Left ventricle myocardium superior (tissue), 1 donor: ENCODE measurements at regions of chr1 and their contacts with region 1.

Region 1: GRCh38 chr1:205485338-205486228 is 18.9 kb upstream of the CDK18 start:
- DNase-seq: peak; percentile 63
- ATAC-seq: peak; percentile 79

Region 2: DNA sequence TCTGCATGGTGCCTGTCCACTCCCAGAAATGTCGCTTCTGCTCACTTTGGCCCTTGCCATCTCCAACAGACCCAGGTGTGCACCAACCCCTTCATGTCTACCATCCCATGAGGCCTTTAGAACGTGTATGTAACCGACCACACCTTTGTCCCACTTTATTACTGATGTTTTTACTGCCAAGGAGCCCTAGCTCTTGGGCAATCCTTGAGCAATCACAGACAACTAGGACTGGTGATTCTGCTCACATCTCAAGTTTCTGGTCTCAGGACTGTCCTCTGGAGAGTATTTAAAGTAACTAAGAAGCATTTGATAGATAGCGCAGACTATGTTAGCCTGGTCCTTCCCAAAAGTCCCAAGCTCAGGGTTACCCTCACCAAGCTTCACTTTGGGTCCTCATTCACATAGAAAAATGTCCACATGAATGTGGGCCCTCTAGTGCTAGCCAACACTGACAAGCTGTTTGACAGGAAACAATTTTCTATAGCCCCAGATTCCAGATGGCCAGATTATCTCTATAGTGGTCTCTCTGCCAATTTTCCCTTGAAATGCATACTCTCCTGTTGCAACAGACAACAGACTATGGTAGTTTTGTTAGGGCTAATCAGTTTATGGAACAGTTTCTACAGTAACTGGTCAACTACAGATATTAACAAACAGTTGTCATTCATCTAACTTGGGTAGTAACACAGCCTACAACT is 394.4 kb before region 1 on chr1:
- intact Hi-C with region 1: no loop called
- DNase-seq: no peak
- ATAC-seq: no peak

Region 3: DNA sequence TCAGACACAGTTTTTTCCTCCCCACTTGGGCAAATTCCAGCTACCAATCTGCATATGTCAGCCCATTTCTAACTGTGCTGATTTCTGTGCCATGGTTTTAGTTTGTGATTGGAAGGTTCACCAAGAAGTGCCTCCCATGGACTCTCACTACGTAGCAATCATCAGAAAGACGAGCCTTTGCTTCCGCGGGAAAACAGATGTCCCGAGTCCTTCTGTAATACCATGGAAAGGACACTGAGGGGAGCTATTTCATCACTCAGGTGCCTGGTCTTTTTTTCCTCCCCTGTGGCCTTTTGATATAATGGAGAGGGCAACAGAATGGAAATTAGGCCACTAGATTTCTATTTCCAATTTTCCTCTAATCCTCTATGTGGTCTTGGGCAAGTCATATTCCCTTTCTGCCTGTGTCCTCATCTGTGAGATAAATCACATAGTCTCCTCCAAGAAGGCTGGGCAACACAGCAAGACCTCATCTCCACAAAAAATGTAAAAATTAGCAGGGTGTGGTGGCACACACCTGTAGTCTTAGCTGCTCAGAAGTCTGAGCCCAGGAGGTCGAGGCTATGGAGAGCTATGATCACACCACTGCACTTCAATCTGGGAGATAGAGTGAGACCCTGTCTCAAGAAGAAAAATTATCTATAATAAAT is 88.5 kb before region 1 on chr1:
- intact Hi-C with region 1: loop called (anchors 5 kb)
- DNase-seq: no peak
- ATAC-seq: peak; percentile 69

Region 4: GRCh38 chr1:205523891-205524793 is 38.6 kb after region 1 on chr1:
- intact Hi-C with region 1: loop called (anchors 2 kb)
- DNase-seq: peak; percentile 84
- ATAC-seq: peak; percentile 61

Region 5: GRCh38 chr1:205568469-205569361 is 83.1 kb after region 1 on chr1:
- intact Hi-C with region 1: no loop called
- DNase-seq: peak; percentile 43
- ATAC-seq: peak; percentile 38

Region 6: GRCh38 chr1:205584732-205585131 is 99.1 kb after region 1 on chr1:
- intact Hi-C with region 1: no loop called
- DNase-seq: no peak
- ATAC-seq: no peak

Region 7: DNA sequence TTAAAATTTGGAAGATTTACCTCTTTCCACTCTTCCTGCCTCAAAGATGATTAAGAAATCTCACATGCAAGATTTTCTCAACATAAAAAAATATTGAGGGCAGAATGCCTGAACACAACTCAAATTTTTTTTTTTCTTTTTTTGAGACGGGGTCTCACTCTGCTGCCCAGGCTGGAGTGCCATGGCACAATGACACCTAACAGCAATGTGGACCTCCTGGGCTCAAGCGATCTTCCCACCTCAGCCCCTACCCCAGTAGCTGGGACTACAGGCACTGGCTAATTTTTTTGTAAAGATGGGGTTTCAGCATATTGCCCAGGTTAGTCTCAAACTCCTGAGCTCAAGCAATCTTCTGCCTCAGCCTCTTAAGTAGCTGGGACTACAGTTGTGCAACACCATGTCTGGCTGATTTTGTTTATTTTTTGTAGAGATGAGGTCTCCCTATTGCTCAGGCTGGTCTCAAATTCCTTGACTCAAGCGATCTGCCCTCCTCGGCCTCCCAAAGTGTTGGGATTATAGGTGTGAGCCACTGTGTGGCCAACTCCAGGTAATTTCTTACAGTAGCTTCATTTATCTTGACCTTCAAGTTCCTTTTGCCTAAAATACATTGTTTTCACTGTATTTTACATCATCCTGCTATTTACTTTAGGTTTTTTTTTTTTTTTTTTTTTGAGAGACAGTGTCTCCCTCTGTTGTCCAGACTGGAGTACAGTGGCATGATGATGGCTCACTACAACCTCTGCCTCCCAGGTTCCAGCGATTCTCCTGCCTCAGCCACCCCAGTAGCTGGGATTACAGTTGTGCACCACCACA is 254.0 kb after region 1 on chr1:
- intact Hi-C with region 1: no loop called
- DNase-seq: no peak
- ATAC-seq: no peak